Panc1 (cell line): ENCODE measurements at regions of chr9 and their contacts with region 1.

Region 1: GRCh38 chr9:118577121-118577520 is 792.1 kb downstream of the BRINP1 start:
- DNase-seq: no peak
- ATAC-seq: no peak
- H3K4me3 ChIP-seq: no peak overlapping the region
- H3K27ac ChIP-seq: no peak overlapping the region
- H3K4me1 ChIP-seq: no peaks in the 10 kb centered on the region
- H3K27me3 ChIP-seq: no peaks in the 10 kb centered on the region
- CTCF ChIP-seq: no peak

Region 2: GRCh38 chr9:118563677-118564076 is 13.4 kb before region 1 on chr9:
- CTCF ChIA-PET with region 1: no interaction called
- POLR2A ChIA-PET with region 1: no interaction called
- in situ Hi-C with region 1: no loop called
- intact Hi-C with region 1: loop called (anchors 2 kb)
- DNase-seq: no peak
- ATAC-seq: no peak
- H3K4me3 ChIP-seq: no peak overlapping the region
- H3K27ac ChIP-seq: no peak overlapping the region
- H3K4me1 ChIP-seq: no peaks in the 10 kb centered on the region
- H3K27me3 ChIP-seq: no peaks in the 10 kb centered on the region
- CTCF ChIP-seq: no peak

Region 3: GRCh38 chr9:118630931-118631595 is 53.9 kb after region 1 on chr9:
- CTCF ChIA-PET with region 1: no interaction called
- POLR2A ChIA-PET with region 1: no interaction called
- in situ Hi-C with region 1: no loop called
- intact Hi-C with region 1: no loop called
- DNase-seq: no peak
- ATAC-seq: no peak
- H3K4me3 ChIP-seq: no peak overlapping the region
- H3K27ac ChIP-seq: no peak overlapping the region
- H3K4me1 ChIP-seq: no peaks in the 10 kb centered on the region
- H3K27me3 ChIP-seq: no peaks in the 10 kb centered on the region
- CTCF ChIP-seq: no peak